Activated CD8-positive, alpha-beta memory T cell treated with anti-CD3 and anti-CD28 coated beads, Interleukin-2, amount 10 ng/mL, durations not matched to agents 7 days and 5 days (primary cell): ENCODE measurements at regions of chr2 and their contacts with region 1.

Region 1: GRCh38 chr2:218186355-218186766 is 19.6 kb upstream of the CXCR1 start:
- DNase-seq: peak; percentile 81
- ATAC-seq: peak; percentile 95
- H3K4me3 Mint-ChIP-seq: no peak overlapping the region
- H3K27ac Mint-ChIP-seq: no peak overlapping the region
- H3K4me1 Mint-ChIP-seq: peaks cover 15% of the 10 kb centered on the region
- H3K27me3 Mint-ChIP-seq: peaks cover 7% of the 10 kb centered on the region

Region 2: DNA sequence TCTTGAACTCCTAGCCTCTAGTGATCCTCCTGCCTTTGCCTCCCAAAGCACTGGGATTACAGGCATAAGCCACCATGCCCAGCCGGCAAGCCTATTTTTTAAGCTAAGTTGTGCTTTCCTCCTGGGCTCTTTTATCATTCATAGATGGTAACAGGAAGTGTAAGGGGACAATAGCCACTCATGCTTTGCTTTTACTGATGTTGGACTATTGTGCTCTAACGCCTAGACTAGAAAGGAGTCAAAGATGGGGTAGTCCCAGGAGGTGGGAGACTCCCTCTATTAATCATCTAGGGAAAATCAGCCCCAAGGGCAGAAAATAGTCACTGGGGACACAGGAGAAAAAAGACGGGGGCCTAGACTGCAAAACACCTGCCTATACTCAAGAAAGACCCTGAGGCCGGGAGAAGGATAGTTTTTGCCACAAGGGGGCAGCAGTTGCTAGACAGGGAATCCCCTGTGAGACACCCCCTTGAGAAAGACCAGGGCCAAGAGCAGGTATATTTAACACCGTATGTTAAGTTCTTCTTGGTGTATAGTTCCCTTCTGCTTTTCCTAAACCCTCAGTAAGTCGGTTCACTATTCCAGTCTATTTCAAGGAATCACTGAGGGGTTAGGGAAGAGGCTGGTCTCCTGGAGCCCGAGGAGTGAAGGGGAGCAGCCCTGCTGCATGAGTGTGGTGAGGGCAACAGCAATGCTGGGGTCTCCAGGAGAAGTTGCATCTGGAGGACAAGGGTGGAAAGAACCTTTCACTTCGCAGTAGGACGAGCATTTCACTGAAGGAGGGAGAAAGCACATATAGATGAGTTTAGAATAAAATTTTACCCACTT is 17.5 kb before region 1 on chr2:
- CTCF ChIA-PET with region 1: interaction called, 11 read pairs
- DNase-seq: peak; percentile 82
- ATAC-seq: peak; percentile 74
- H3K4me3 Mint-ChIP-seq: no peak overlapping the region
- H3K27ac Mint-ChIP-seq: no peak overlapping the region
- H3K4me1 Mint-ChIP-seq: peaks cover 20% of the 10 kb centered on the region
- H3K27me3 Mint-ChIP-seq: peaks cover 37% of the 10 kb centered on the region

Region 3: GRCh38 chr2:218229239-218229638 is 42.9 kb after region 1 on chr2:
- CTCF ChIA-PET with region 1: interaction called, 22 read pairs
- DNase-seq: peak; percentile 80
- ATAC-seq: peak; percentile 88
- H3K4me3 Mint-ChIP-seq: peak overlapping the region; percentile 42
- H3K27ac Mint-ChIP-seq: peak overlapping the region; percentile 90
- H3K4me1 Mint-ChIP-seq: peaks cover 75% of the 10 kb centered on the region
- H3K27me3 Mint-ChIP-seq: no peaks in the 10 kb centered on the region

Region 4: DNA sequence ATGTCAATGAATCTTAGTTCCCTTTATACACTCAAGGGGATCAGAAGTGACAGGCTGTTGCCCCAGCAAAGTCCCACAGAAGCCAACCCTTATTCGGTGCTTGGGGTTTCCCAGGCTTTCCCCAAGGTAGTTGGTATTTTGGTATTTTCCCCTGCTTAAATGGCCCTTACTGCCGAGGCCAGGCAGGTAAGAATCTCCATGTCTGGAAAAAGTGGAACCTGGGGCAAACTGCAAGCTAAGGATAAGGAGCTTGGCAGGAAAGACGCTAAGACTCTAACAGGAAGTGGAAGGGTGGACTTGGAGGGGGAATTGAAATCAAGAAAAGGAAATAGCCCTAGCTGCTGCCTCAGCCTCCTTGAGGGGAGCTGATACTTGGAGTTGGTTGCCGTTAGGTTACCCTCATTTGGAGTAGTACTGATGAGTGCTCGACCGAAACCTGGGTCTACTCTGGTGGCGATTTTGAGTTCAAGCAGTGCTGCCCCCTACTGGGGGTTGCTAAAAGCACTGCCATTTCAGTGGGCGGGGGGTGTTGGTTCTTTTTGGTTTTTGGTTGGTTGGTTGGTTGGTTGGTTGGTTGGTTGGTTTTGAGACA is 71.1 kb after region 1 on chr2:
- CTCF ChIA-PET with region 1: interaction called, 17 read pairs
- DNase-seq: peak; percentile 81
- ATAC-seq: peak; percentile 80
- H3K4me3 Mint-ChIP-seq: peak overlapping the region; percentile 8
- H3K27ac Mint-ChIP-seq: peak overlapping the region; percentile 86
- H3K4me1 Mint-ChIP-seq: peaks cover 20% of the 10 kb centered on the region
- H3K27me3 Mint-ChIP-seq: no peaks in the 10 kb centered on the region

Region 5: GRCh38 chr2:218476676-218477075 is 290.3 kb after region 1 on chr2:
- CTCF ChIA-PET with region 1: no interaction called
- DNase-seq: no peak
- ATAC-seq: no peak
- H3K4me3 Mint-ChIP-seq: no peak overlapping the region
- H3K27ac Mint-ChIP-seq: no peak overlapping the region
- H3K4me1 Mint-ChIP-seq: peaks cover 12% of the 10 kb centered on the region
- H3K27me3 Mint-ChIP-seq: no peaks in the 10 kb centered on the region